ENCODE measurements at regions of chr2 and their contacts with region 1.

Region 1: DNA sequence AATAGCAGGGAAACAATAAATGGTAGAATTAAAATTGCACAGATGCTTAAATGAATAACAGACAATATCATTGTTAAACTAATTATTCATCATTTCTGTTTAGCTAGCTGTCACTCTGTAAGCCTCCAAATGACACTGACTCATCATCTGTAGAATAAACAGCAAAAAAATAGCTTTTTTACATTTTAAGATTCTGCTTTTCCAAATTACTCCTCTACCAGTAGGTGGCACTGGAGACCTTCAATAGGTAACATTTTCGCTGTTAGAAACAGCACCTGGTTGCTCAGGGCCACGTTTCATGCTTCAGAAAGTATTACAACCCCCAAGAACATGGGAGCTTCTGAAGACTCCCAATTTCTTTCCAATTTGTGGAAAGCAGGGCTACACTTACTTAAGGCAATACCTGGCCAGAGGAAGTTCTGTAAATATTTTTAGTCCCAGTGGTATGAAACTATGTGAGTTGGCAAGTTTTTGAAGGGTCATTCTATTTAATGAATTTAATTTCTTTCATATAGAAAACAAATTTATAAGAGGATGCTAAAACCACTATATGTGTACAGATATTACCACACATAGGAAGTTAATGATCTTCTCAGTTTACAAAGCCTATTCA is 45.4 kb downstream of the TTN start:
- DNase-seq: peak; percentile 37
- ATAC-seq: peak; percentile 80
- H3K4me3 Mint-ChIP-seq: no peak overlapping the region
- H3K27ac Mint-ChIP-seq: no peak overlapping the region
- H3K4me1 Mint-ChIP-seq: no peaks in the 10 kb centered on the region
- H3K27me3 Mint-ChIP-seq: no peaks in the 10 kb centered on the region
- CTCF ChIP-seq: peak; percentile 84

Region 2: DNA sequence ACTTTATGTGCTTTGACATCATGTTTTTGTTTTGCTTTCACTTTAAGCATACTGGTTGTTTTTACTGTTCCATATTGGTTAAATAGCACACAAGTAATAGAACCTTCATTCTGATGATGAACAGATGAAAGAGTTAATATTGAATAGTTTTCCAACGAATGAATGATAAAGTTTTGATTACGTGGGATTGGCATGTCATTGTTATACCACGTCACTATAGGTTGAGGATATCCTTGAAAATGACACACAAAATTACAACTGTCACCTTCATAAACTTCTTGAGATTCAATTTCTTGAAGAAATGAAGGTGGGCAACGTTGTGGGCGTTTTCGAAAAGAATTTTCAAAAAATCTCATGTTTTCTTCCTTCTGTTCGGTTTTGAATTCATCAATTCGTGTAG is 11.6 kb before region 1 on chr2:
- CTCF ChIA-PET with region 1: interaction called, 10 read pairs
- POLR2A ChIA-PET with region 1: no interaction called
- intact Hi-C with region 1: no loop called
- DNase-seq: no peak
- ATAC-seq: no peak
- H3K4me3 Mint-ChIP-seq: no peak overlapping the region
- H3K27ac Mint-ChIP-seq: no peak overlapping the region
- H3K4me1 Mint-ChIP-seq: no peaks in the 10 kb centered on the region
- H3K27me3 Mint-ChIP-seq: no peaks in the 10 kb centered on the region
- CTCF ChIP-seq: no peak

Region 3: GRCh38 chr2:178811901-178812300 is 50.0 kb after region 1 on chr2:
- CTCF ChIA-PET with region 1: interaction called, 12 read pairs
- POLR2A ChIA-PET with region 1: no interaction called
- intact Hi-C with region 1: no loop called
- DNase-seq: no peak
- ATAC-seq: no peak
- H3K4me3 Mint-ChIP-seq: no peak overlapping the region
- H3K27ac Mint-ChIP-seq: no peak overlapping the region
- H3K4me1 Mint-ChIP-seq: no peaks in the 10 kb centered on the region
- H3K27me3 Mint-ChIP-seq: no peaks in the 10 kb centered on the region
- CTCF ChIP-seq: no peak

Region 4: GRCh38 chr2:178976351-178976750 is 214.5 kb after region 1 on chr2:
- CTCF ChIA-PET with region 1: no interaction called
- POLR2A ChIA-PET with region 1: no interaction called
- intact Hi-C with region 1: no loop called
- DNase-seq: no peak
- ATAC-seq: no peak
- H3K4me3 Mint-ChIP-seq: no peak overlapping the region
- H3K27ac Mint-ChIP-seq: no peak overlapping the region
- H3K4me1 Mint-ChIP-seq: no peaks in the 10 kb centered on the region
- H3K27me3 Mint-ChIP-seq: no peaks in the 10 kb centered on the region
- CTCF ChIP-seq: no peak

Measured in activated CD8-positive, alpha-beta T cell treated with anti-CD3 and anti-CD28 coated beads for 36 hours (primary cell).